ENCODE measurements at regions of chr17 and their contacts with region 1.

Region 1: GRCh38 chr17:50200457-50201275 is 765 bp downstream of the COL1A1 start:
- DNase-seq: peak; percentile 86 to 89 (median 88)
- ATAC-seq: peak; percentile 82 to 85 (median 83)
- H3K4me3 ChIP-seq: peak overlapping the region; percentile 27 to 53 (median 38)
- H3K27ac ChIP-seq: peak overlapping the region; percentile 32 to 52 (median 41)
- H3K4me1 ChIP-seq: peaks cover 0 to 12% (median 0%) of the 10 kb centered on the region in 4 donors
- H3K27me3 ChIP-seq: no peaks in the 10 kb centered on the region
- CTCF ChIP-seq: peak; percentile 99 to 100 (median 100)
- POLR2A ChIP-seq: no peak

Region 2: DNA sequence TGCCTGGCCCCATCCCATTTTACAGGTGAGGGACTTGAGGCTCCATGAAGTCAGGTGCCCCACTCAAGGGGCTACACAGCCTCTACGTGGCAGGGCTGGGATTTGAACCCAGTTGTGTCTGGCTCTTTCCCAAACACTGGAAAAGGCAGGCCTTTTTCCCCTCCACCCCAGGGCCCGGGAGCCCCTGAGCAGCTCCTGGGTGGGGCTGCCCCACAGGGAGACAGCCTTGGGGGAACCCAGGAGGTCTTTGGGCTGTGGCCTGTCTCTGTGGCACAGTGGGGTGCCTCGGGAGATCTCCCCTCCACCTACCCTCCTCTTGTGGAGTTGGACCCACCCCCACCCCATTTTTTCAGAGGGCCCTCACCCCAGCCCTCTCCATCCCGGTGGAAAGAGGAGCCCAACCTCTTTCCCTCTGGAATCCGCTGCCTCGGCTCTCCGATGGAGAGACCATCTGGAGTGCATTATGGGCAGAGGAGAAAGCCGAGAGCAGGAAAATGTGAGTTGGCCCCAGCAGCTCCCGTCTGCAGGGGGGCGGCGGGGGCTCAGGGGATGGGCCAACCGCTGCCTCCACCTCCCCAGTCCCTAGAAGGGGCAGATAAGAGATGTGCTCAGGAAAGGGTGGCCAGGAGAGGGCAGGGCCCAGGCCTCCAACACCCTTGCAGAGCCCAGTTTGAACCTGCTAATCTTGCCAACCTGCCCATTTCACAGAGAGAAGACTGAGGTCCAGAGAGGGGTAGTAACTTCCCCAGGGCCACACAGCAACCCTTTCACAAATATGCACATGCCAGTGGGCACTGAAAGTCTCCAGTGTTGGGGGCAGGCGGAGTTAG is 58.2 kb after region 1 on chr17:
- intact Hi-C with region 1: no loop called
- DNase-seq: no peak
- ATAC-seq: no peak
- H3K4me3 ChIP-seq: no peak overlapping the region
- H3K27ac ChIP-seq: no peak overlapping the region
- H3K4me1 ChIP-seq: no peaks in the 10 kb centered on the region
- H3K27me3 ChIP-seq: no peaks in the 10 kb centered on the region
- CTCF ChIP-seq: no peak
- POLR2A ChIP-seq: no peak

Region 3: GRCh38 chr17:50269477-50270434 is 69.1 kb after region 1 on chr17:
- intact Hi-C with region 1: loop called (anchors 2 to 5 kb)
- DNase-seq: peak; percentile 61 to 67 (median 65)
- ATAC-seq: peak; percentile 42 to 71 (median 54)
- H3K4me3 ChIP-seq: no peak overlapping the region
- H3K27ac ChIP-seq: no peak overlapping the region
- H3K4me1 ChIP-seq: peaks cover 0 to 14% (median 0%) of the 10 kb centered on the region in 4 donors
- H3K27me3 ChIP-seq: no peaks in the 10 kb centered on the region
- CTCF ChIP-seq: peak; percentile 66 to 72 (median 72)
- POLR2A ChIP-seq: no peak

Region 4: DNA sequence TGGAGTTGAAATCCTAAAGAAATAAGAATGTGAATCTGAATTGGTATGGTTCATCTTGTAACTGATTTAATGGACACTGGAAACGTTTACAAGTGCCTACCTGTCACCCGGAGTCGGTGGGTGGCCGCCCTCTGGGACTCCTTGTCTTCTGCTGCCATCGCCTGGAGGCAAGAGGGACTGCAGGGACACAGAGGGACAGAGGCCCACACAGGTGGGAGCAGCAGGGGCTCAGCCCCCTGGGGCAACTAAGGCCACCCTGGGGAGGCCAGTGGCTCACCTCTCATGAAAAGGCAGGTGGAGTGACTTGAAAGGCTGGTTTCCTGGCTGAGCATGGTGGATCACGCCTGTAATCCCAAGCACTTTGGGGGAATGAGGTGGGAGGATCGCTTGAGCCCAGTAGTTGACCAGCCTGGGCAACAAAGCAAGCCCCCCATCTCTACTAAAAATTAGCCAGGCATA is 96.8 kb after region 1 on chr17:
- intact Hi-C with region 1: loop called (anchors 5 kb)
- DNase-seq: peak; percentile 77 to 83 (median 81)
- ATAC-seq: peak; percentile 98 to 99 (median 98)
- H3K4me3 ChIP-seq: no peak overlapping the region
- H3K27ac ChIP-seq: no peak overlapping the region
- H3K4me1 ChIP-seq: no peaks in the 10 kb centered on the region
- H3K27me3 ChIP-seq: no peaks in the 10 kb centered on the region
- CTCF ChIP-seq: peak; percentile 91 to 98 (median 94)
- POLR2A ChIP-seq: no peak

Region 5: DNA sequence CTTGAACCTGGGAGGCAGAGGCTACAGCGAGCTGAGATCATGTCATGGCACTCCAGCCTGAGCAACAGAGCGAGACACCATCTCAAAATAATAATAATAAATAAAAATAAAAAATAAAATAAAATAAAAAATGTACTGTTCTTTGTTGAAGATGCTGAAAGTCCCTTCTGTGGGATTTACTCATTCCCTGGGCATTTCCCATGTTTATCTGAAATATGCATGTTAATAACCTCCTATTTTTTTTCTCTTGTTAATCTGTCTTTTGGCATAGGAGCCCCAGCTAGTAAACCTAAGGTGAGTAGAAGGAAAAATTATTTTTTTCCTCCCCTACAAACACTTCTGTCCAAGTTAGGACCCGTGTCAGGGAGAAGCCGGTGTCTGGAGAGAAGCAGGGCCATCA is 108.0 kb after region 1 on chr17:
- intact Hi-C with region 1: no loop called
- DNase-seq: no peak
- ATAC-seq: no peak
- H3K4me3 ChIP-seq: no peak overlapping the region
- H3K27ac ChIP-seq: no peak overlapping the region
- H3K4me1 ChIP-seq: no peaks in the 10 kb centered on the region
- H3K27me3 ChIP-seq: no peaks in the 10 kb centered on the region
- CTCF ChIP-seq: no peak
- POLR2A ChIP-seq: no peak

Measured in right lobe of liver (tissue), 6 donors.